Activated CD4-positive, alpha-beta T cell treated with anti-CD3 and anti-CD28 coated beads for 36 hours (primary cell): ENCODE measurements at regions of chr14 and their contacts with region 1.

Region 1: GRCh38 chr14:35416108-35416750 is 11.7 kb upstream of the NFKBIA start:
- DNase-seq: peak; percentile 86
- ATAC-seq: peak; percentile 75
- H3K4me3 Mint-ChIP-seq: peak overlapping the region; percentile 60
- H3K27ac Mint-ChIP-seq: peak overlapping the region; percentile 94
- H3K4me1 Mint-ChIP-seq: peaks cover 53% of the 10 kb centered on the region
- H3K27me3 Mint-ChIP-seq: no peaks in the 10 kb centered on the region

Region 2: GRCh38 chr14:34331728-34332623 is 1084.3 kb before region 1 on chr14:
- CTCF ChIA-PET with region 1: interaction called, 5 read pairs
- POLR2A ChIA-PET with region 1: no interaction called
- intact Hi-C with region 1: loop called in 1 of 2 experiments (anchors 5 kb)
- DNase-seq: peak; percentile 79
- ATAC-seq: peak; percentile 94
- H3K4me3 Mint-ChIP-seq: no peak overlapping the region
- H3K27ac Mint-ChIP-seq: no peak overlapping the region
- H3K4me1 Mint-ChIP-seq: peaks cover 4% of the 10 kb centered on the region
- H3K27me3 Mint-ChIP-seq: no peaks in the 10 kb centered on the region

Region 3: DNA sequence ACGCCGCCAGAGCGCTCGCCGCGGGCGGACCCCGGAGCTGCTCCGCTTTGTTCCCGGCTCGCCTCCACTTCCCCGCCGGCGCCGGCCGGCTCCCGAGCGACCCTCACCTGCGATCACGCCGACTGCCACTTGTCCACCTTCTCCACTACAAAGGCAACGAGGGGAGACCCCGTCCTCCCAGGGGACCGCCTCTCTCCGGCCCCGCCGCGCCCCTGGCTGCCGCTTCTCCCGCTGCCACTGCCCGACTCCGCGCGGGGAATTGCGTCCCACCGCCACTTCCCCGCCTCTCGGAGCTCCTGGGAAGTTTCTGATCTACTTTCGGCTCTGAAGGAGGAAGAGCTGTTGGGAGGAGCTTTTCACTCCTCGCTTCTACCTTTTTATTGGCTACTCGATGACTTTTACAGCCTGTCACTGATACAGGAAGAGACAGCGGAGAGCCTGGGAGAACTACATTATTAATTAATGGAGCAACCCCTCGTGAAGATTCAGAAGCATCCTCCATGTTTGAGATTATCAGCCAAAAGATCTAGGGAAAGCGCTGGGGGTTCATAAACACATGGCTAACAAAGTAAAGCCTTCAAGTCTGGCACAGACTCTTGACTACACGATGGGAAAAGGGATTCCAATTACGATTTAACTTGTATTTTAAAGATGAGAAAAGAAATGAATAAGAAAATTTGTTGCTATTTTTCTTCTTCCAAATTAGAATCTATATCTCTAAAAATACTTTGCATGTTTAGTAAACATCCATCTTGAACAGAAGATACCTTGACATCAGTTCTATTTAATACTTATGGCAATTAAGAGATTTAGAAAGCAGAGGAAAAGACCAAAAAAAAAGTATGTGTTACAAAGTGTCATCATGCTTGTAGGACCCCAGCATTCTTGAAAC is 541.0 kb before region 1 on chr14 and contains the start of gene BAZ1A:
- CTCF ChIA-PET with region 1: interaction called, 3 read pairs
- POLR2A ChIA-PET with region 1: no interaction called
- intact Hi-C with region 1: loop called in 1 of 2 experiments (anchors 5 kb)
- DNase-seq: peak; percentile 50
- ATAC-seq: peak; percentile 9
- H3K4me3 Mint-ChIP-seq: peak within 1 kb of the TSS; percentile 99
- H3K27ac Mint-ChIP-seq: peak within 1 kb of the TSS; percentile 98
- H3K4me1 Mint-ChIP-seq: peaks cover 29% of the 10 kb centered on the region
- H3K27me3 Mint-ChIP-seq: no peaks in the 10 kb centered on the region
- total RNA-seq, gene BAZ1A: 53.9 to 75.2 TPM

Region 4: DNA sequence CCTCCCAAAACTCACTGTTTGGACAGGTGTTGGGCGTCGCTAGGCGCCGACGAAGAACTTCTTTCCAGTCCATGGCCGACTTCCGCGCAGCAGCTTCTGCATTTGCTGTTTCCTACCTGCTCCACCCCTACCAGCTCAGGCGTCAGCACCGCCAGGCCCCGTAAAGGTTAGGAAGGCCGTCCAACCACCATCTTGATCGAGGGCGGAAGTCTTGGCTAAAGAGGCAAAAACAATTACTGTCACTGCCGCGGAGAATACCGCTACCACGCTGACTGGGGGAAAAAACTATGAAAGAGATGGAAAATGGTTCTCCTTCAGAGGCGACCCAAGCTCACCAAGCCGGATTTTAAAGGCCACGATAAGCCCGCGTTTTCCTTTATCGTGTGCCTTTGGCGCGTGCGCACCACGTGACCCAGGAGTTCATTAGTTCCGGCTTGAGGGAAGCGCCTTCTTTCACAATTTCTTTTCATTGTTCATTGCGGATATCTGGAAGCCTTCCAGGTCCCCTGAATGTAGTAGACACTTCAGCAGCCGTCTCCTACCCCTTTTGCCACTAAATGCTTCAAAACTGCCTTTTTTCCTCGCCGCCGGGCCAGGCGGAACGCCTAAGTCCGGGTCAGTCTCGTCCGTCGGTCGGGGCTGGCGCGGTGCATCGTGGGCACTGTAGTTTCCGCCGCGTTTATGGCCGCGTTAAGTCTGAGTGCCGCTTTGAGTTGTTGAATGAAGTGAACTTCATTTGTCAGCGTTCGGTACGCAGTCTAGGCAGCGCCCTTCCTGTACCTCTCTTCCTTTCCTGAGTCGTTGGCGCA is 294.1 kb before region 1 on chr14 and contains the starts of genes PPP2R3C and PRORP:
- CTCF ChIA-PET with region 1: interaction called, 7 read pairs
- POLR2A ChIA-PET with region 1: interaction called, 8 read pairs
- intact Hi-C with region 1: loop called (anchors 1 to 5 kb)
- DNase-seq: peak; percentile 93
- ATAC-seq: peak; percentile 87
- H3K4me3 Mint-ChIP-seq: peak within 1 kb of the TSS; percentile 87
- H3K27ac Mint-ChIP-seq: peak within 1 kb of the TSS; percentile 99
- H3K4me1 Mint-ChIP-seq: peaks cover 64% of the 10 kb centered on the region
- H3K27me3 Mint-ChIP-seq: no peaks in the 10 kb centered on the region
- total RNA-seq, gene PPP2R3C: 43.8 to 53.5 TPM
- total RNA-seq, gene PRORP: 37.3 to 51.1 TPM

Region 5: GRCh38 chr14:35229495-35230089 is 186.6 kb before region 1 on chr14:
- CTCF ChIA-PET with region 1: interaction called, 85 read pairs
- POLR2A ChIA-PET with region 1: interaction called, 3 read pairs
- intact Hi-C with region 1: loop called in 1 of 2 experiments (anchors 1 kb)
- DNase-seq: no peak
- ATAC-seq: peak; percentile 63
- H3K4me3 Mint-ChIP-seq: no peak overlapping the region
- H3K27ac Mint-ChIP-seq: peak overlapping the region; percentile 51
- H3K4me1 Mint-ChIP-seq: peaks cover 27% of the 10 kb centered on the region
- H3K27me3 Mint-ChIP-seq: no peaks in the 10 kb centered on the region

Region 6: DNA sequence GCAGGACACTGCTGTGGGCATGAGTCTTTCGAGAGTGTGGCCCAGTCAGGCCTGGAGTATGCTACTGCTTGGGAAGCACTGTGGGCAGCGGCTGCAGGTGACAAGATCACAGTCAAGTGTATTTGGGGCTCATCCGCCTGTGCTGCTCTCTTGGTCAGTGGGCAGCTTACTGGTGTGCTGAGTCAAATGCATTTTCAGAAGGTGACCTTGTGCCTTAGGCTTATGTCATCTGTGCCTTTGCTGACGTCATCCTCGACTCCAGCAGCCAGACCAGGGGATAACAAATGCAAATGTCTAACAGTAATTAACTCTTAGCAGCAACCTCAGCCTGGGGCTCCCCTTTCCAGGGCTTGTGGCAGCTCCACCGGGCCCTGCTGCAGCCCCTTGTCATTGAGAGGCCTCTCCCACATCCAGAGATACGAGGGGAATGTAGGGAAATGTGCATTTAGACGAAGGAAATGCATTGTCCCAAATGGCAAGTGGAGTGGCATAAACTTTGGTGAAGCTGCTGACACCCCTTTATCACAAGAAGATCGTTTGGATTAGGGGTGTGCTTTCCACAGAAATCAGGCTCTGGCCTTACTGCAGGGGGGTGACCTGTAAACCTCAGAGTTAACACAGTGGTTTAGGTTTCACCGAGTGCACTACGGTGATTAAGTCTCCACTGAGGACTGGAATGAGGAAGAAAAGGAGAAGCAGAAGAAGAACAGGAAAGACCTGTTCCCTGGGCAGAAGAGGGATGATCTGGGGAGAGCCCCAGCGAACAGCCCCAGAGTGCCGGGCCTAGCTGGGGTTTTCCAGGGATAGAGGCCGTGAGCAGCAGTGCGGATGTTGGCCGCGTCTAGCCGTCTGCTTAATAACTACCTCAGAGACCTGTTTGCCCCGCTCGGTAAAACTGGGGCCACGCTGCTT is 84.4 kb before region 1 on chr14:
- CTCF ChIA-PET with region 1: interaction called, 6 read pairs
- POLR2A ChIA-PET with region 1: interaction called, 13 read pairs
- intact Hi-C with region 1: no loop called
- DNase-seq: no peak
- ATAC-seq: no peak
- H3K4me3 Mint-ChIP-seq: no peak overlapping the region
- H3K27ac Mint-ChIP-seq: peak overlapping the region; percentile 96
- H3K4me1 Mint-ChIP-seq: peaks cover 32% of the 10 kb centered on the region
- H3K27me3 Mint-ChIP-seq: no peaks in the 10 kb centered on the region

Region 7: DNA sequence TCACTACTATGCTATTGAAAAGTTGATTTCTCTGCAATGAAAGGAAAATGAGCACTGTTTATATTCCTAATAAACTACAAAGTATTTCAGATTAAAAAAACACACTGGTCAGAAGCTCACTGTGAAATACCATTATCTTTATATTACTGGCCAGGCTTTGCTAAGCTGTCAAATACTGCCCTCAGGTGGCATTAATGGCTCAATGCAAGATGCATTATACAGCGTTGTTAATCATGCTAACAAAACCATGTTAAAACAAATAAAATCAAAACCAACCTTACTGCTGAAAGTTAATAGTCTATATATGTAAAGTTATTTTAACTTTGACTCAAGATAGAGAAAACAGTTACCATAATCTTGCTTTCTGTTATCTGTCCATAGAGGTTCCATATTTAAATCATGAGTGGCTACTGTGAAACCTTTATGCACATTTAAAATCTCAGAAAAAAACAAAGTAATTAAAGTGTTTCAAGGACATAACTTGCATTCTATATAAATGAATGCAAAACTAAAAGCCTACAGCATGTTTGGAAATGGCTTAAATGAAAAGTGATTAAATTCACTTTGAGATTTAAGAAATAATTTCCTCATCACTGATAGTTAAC is 271.2 kb after region 1 on chr14:
- CTCF ChIA-PET with region 1: interaction called, 3 read pairs
- POLR2A ChIA-PET with region 1: no interaction called
- intact Hi-C with region 1: loop called in 1 of 2 experiments (anchors 2 kb)
- DNase-seq: peak; percentile 42
- ATAC-seq: peak; percentile 51
- H3K4me3 Mint-ChIP-seq: no peak overlapping the region
- H3K27ac Mint-ChIP-seq: no peak overlapping the region
- H3K4me1 Mint-ChIP-seq: peaks cover 16% of the 10 kb centered on the region
- H3K27me3 Mint-ChIP-seq: no peaks in the 10 kb centered on the region